ENCODE measurements at regions of chr15 and their contacts with region 1.

Region 1: GRCh38 chr15:29925227-29926082 is 103.2 kb upstream of the TJP1 start:
- DNase-seq: peak; percentile 60
- H3K4me3 Mint-ChIP-seq: no peak overlapping the region
- H3K27ac Mint-ChIP-seq: peak overlapping the region; percentile 53
- H3K4me1 Mint-ChIP-seq: peaks cover 8% of the 10 kb centered on the region
- H3K27me3 Mint-ChIP-seq: no peaks in the 10 kb centered on the region
- CTCF ChIP-seq: no peak

Region 2: DNA sequence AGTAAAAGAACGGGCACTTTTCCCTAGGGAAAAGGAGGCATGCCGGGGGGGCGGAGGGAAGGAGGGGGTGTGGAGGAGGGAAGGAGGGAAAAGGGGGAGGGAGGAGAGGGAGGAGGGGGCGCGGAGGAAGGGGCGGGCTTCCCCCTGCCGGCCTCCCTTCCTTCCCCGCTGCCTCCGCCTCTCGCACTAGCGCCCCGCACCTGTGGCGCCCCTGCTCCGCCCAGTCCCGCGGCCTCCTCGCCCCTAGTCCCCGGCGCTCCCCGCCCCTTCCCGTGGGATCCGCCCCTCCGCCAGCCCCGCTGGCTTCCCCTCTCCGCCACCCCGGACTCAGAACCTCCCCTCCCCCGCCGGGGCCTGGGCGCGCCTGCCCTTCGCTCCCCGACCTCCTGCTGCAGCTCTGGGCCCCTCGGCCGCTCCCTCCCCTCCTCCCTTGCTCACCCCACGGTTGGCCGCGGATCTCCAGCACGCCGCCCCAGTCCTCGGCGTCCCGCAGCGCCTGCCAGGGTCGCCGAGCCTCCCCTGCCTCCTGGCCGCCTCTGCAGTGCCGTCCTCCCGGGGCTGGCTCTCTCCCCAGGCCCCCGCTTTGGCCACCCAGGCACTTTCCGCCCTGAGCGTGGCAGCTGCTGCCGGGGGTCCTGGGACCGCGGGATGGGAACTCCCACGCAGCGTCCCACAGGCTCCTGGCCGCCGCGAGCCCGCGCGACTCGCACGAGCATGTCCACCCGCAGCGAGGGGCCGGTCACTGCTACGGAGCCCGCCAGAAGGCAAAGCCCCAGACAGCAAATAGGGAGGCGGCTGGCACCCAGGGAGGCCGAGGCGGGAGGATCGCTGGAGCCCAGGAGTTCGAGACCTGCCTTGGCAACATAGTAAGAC is 250.6 kb before region 1 on chr15:
- CTCF ChIA-PET with region 1: no interaction called
- intact Hi-C with region 1: loop called (anchors 10 kb)
- DNase-seq: peak; percentile 76
- H3K4me3 Mint-ChIP-seq: peak overlapping the region; percentile 66
- H3K27ac Mint-ChIP-seq: no peak overlapping the region
- H3K4me1 Mint-ChIP-seq: peaks cover 9% of the 10 kb centered on the region
- H3K27me3 Mint-ChIP-seq: no peaks in the 10 kb centered on the region
- CTCF ChIP-seq: no peak

Region 3: GRCh38 chr15:29747837-29748417 is 177.5 kb before region 1 on chr15:
- CTCF ChIA-PET with region 1: interaction called, 12 read pairs
- intact Hi-C with region 1: loop called (anchors 5 kb)
- DNase-seq: no peak
- H3K4me3 Mint-ChIP-seq: no peak overlapping the region
- H3K27ac Mint-ChIP-seq: no peak overlapping the region
- H3K4me1 Mint-ChIP-seq: no peaks in the 10 kb centered on the region
- H3K27me3 Mint-ChIP-seq: no peaks in the 10 kb centered on the region
- CTCF ChIP-seq: no peak

Region 4: DNA sequence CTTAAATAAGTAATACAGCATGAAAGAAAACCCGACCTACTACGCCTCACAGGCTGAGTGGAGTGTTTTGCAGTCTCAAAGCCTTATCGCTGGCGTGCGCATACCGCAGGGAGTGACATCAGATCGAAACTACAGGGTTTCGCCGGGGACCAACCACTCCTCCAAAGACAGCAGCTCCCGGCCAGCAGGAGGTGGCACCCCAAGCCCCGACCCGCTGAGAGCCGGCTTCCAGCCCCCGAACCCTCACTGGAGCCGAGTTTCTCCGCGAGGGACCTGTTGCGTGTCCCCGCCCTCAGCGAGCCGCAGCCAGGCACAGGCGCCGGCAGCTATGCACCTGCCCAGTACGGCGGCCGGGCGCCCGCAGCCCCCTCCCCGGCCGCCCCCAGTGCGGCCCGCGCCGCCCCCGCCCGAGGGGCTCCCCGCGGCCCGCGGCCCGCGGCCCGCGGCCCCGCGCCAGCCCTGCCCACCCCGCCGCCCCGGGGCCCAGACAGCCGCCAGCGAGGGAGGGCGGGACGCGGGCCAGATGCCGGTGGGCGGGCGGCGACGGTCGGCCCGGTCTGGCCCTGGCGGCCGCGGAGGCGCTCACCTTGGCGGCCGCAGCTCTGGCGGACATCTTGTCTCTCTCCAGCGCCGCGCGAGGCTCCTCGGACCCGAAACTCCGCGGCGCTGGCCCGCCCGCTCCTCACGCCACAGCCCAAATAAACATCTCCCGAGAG is 103.9 kb before region 1 on chr15:
- CTCF ChIA-PET with region 1: no interaction called
- intact Hi-C with region 1: loop called (anchors 2 kb)
- DNase-seq: peak; percentile 63
- H3K4me3 Mint-ChIP-seq: peak overlapping the region; percentile 65
- H3K27ac Mint-ChIP-seq: no peak overlapping the region
- H3K4me1 Mint-ChIP-seq: no peaks in the 10 kb centered on the region
- H3K27me3 Mint-ChIP-seq: no peaks in the 10 kb centered on the region
- CTCF ChIP-seq: no peak